PC-9 (cell line): ENCODE measurements at regions of chr10 and their contacts with region 1.

Region 1: DNA sequence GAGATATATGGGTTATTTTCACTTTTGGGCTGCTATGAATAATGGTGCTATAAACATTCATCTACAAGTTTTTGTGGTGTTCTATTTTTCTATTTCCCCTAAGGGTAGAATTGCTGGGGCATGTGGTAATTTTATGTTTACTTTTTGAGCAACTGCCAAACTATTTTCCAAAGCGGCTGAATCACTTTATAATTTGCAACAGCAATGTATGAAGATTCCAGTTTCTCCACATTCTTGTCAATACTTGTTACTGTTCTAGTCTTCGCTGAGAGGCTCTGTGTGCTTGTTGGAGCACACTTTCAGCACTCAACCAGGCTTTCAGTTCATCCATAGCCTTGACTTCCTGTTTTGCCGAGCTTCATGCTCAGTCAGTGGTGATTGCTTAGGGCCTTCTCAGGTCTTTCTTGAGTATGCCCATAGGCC is 39.0 kb downstream of the ADK start:
- DNase-seq: peak; percentile 70 to 98
- H3K4me3 ChIP-seq: peak overlapping the region; percentile 50; the same call in 1 of the 2 replicates
- H3K27ac ChIP-seq: peak overlapping the region; percentile 96
- H3K4me1 ChIP-seq: peaks cover 74% of the 10 kb centered on the region
- H3K27me3 ChIP-seq: no peaks in the 10 kb centered on the region
- CTCF ChIP-seq: no peak

Region 2: GRCh38 chr10:74208091-74208524 is 18.1 kb after region 1 on chr10:
- CTCF ChIA-PET with region 1: no interaction called
- POLR2A ChIA-PET with region 1: no interaction called
- intact Hi-C with region 1: loop called (anchors 1 kb)
- DNase-seq: no peak
- H3K4me3 ChIP-seq: no peak overlapping the region
- H3K27ac ChIP-seq: no peak overlapping the region
- H3K4me1 ChIP-seq: peaks cover 17% of the 10 kb centered on the region
- H3K27me3 ChIP-seq: no peaks in the 10 kb centered on the region
- CTCF ChIP-seq: no peak

Region 3: GRCh38 chr10:74394416-74394969 is 204.5 kb after region 1 on chr10:
- CTCF ChIA-PET with region 1: no interaction called
- POLR2A ChIA-PET with region 1: no interaction called
- intact Hi-C with region 1: no loop called
- DNase-seq: no peak
- H3K4me3 ChIP-seq: no peak overlapping the region
- H3K27ac ChIP-seq: no peak overlapping the region
- H3K4me1 ChIP-seq: no peaks in the 10 kb centered on the region
- H3K27me3 ChIP-seq: no peaks in the 10 kb centered on the region
- CTCF ChIP-seq: no peak

Region 4: DNA sequence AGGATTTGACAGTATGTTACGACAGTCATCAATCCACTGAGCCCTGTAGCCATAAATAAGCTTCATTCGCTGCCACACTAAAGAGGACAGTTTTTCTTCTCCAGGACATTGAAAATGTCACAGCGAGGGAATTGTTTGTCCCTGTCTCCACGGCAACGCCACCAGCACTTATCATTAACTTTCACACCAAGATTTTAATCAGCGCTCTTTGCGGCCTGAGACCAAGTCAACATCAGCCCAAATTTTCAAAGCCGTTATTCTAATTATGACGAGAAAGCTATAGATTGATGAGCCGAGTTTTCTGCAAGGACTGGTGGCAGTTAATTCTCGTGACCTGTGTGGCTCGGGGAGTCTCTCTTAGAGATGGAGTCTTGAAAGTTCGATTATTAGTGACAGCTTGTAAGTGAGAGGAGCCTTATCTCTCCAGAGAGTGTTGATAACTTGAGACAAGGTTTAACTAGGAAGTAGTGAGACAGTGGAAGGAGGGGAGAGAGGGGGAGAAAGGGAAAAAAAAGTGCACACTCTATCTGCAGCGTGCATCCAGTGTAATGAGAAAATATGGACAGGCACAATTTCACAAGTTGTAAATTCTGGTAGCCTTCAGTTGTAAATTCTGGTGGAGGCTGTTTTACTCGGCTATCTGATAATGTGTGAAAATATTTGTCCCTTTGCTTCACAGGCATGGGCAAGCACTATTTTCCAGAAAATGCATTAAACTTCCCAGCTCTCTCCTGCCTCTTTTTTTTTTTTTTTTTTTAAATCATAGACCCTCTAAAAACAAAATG is 1714.7 kb after region 1 on chr10:
- CTCF ChIA-PET with region 1: no interaction called
- POLR2A ChIA-PET with region 1: no interaction called
- intact Hi-C with region 1: no loop called
- DNase-seq: no peak
- H3K4me3 ChIP-seq: no peak overlapping the region
- H3K27ac ChIP-seq: no peak overlapping the region
- H3K4me1 ChIP-seq: no peaks in the 10 kb centered on the region
- H3K27me3 ChIP-seq: no peaks in the 10 kb centered on the region
- CTCF ChIP-seq: no peak